ENCODE measurements at regions of chr22 and their contacts with region 1.

Region 1: GRCh38 chr22:30005213-30005857 is 74.9 kb upstream of the HORMAD2 start:
- DNase-seq: peak; percentile 49 to 66
- H3K4me3 ChIP-seq: no peak overlapping the region
- H3K27ac ChIP-seq: no peak overlapping the region
- H3K4me1 ChIP-seq: no peaks in the 10 kb centered on the region
- H3K27me3 ChIP-seq: no peaks in the 10 kb centered on the region
- CTCF ChIP-seq: peak; percentile 98

Region 2: DNA sequence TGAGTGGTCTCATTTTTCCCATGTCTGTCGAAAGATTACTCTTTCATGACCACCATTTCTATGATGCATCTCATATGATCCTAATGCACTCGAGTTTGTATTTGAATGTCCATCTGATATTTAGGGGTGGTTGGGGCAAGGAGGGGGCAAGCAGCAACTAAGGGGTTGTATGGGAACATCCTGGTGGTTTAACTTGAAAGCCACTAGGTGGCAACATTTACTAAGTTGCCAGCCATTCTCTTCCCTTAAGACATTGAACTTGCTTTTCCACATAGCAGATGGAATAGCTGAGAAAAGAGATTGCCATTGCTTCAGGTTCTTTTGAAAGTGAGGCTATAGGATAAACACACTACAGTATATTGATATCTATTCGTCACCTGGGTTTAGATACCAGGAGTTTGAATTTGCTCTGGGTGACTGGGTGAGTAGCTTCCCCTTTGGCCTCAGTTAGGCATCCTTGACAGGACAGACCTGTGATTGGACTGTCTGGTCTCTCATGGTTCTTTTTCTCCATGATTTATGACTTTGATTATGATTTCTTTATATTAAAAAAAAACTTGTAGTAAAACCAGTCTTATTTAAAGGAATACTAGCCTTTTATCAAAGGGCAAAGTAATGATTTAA is 369.5 kb before region 1 on chr22:
- CTCF ChIA-PET with region 1: interaction called, 3 read pairs
- POLR2A ChIA-PET with region 1: no interaction called
- intact Hi-C with region 1: loop called (anchors 5 kb)
- DNase-seq: peak in 1 of 2 experiments; percentile 71
- H3K4me3 ChIP-seq: no peak overlapping the region
- H3K27ac ChIP-seq: no peak overlapping the region
- H3K4me1 ChIP-seq: 0 out of 2 replicates have a peak, but pooled peaks cover 4% of the 10 kb centered on the region
- H3K27me3 ChIP-seq: no peaks in the 10 kb centered on the region
- CTCF ChIP-seq: peak; percentile 83

Measured in PC-9 (cell line).